Motor neuron (in vitro differentiated cells): ENCODE measurements at regions of chr1 and their contacts with region 1.

Region 1: GRCh38 chr1:176374967-176375569 is 87.9 kb upstream of the PAPPA2 start:
- ATAC-seq: peak; percentile 67 to 91 (median 80)
- H3K4me3 ChIP-seq: no peak overlapping the region
- H3K27ac ChIP-seq: no peak overlapping the region
- H3K4me1 ChIP-seq: no peaks in the 10 kb centered on the region

Region 2: GRCh38 chr1:176479971-176480370 is 104.9 kb after region 1 on chr1:
- in situ Hi-C with region 1: loop called in 1 of 9 experiments (anchors 25 kb)
- ATAC-seq: peak; percentile 24 to 97 (median 46)
- H3K4me3 ChIP-seq: no peak overlapping the region
- H3K27ac ChIP-seq: no peak overlapping the region
- H3K4me1 ChIP-seq: no peaks in the 10 kb centered on the region

Region 3: GRCh38 chr1:176559878-176560277 is 184.8 kb after region 1 on chr1:
- in situ Hi-C with region 1: loop called in 1 of 9 experiments (anchors 25 kb)
- ATAC-seq: peak; percentile 92 to 100 (median 97)
- H3K4me3 ChIP-seq: no peak overlapping the region
- H3K27ac ChIP-seq: no peak overlapping the region
- H3K4me1 ChIP-seq: peaks cover 0 to 3% of the 10 kb centered on the region in 2 donors

Region 4: GRCh38 chr1:176691251-176692228 is 316.5 kb after region 1 on chr1:
- in situ Hi-C with region 1: loop called in 1 of 9 experiments (anchors 25 kb)
- ATAC-seq: peak; percentile 51 to 88 (median 74)
- H3K4me3 ChIP-seq: no peak overlapping the region
- H3K27ac ChIP-seq: no peak overlapping the region
- H3K4me1 ChIP-seq: peaks cover 8 to 9% of the 10 kb centered on the region in 2 donors

Region 5: GRCh38 chr1:176843352-176844297 is 468.6 kb after region 1 on chr1:
- in situ Hi-C with region 1: loop called in 3 of 9 experiments (anchors 25 kb)
- ATAC-seq: peak in 7 of 8 experiments; percentile 37 to 93 (median 58)
- H3K4me3 ChIP-seq: no peak overlapping the region
- H3K27ac ChIP-seq: no peak overlapping the region
- H3K4me1 ChIP-seq: peaks cover 0 to 14% of the 10 kb centered on the region in 2 donors

Region 6: GRCh38 chr1:176857632-176858031 is 482.6 kb after region 1 on chr1:
- in situ Hi-C with region 1: loop called in 2 of 9 experiments (anchors 25 kb)
- ATAC-seq: peak in 2 of 8 experiments; percentile 69 to 86
- H3K4me3 ChIP-seq: no peak overlapping the region
- H3K27ac ChIP-seq: no peak overlapping the region
- H3K4me1 ChIP-seq: peaks cover 8% of the 10 kb centered on the region in 2 donors